ENCODE measurements at regions of chr11 and their contacts with region 1.

Region 1: DNA sequence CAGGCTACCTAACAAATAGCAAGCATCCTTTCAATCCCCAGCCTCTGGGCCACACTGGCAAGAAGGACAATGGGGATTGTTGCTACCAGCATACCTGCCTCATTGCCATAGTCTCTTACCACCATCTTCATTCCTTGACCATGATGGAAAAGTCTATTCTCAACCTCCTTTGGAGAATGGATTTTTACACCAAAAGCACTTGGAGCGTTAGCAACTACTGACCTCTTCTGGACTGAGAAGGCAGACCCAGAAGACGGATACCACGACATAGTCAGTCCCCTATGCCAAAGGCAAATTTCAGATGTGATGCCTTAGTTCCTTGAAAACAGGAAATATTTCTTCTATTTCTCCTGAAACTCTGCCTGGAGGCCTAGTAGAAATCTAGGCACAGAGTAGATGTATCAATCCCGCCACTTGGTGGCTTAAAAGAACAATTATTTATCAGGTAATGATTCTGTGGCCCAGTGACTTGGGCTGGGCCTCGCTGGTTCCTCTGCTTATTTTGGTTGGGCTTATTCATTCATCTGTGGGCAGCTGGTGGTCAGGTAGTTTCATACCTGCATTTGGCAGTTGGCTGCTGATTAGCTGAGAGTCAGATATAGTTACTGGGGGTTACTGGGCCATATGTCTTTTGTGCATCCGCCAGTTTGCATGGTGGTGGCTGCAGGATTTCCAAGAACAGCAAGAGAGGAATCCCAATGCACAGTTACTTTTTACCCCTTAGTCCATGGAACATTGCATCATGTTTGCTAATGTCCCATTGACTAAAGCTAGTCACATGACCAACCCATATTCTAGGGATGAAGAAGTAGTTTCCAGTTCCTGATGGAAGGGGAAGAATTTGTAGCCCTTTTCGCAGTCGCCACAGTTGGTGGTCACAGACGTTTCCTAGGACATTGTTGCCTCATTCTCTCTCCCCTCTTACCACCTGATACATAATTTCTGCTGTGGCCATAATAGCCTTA is 75.2 kb downstream of the DHCR7 start:
- DNase-seq: peak; percentile 17
- H3K4me3 ChIP-seq: no peak overlapping the region
- H3K27ac ChIP-seq: no peak overlapping the region
- H3K4me1 ChIP-seq: no peaks in the 10 kb centered on the region
- H3K27me3 ChIP-seq: peaks cover 2% of the 10 kb centered on the region
- CTCF ChIP-seq: peak; percentile 42 to 59

Region 2: DNA sequence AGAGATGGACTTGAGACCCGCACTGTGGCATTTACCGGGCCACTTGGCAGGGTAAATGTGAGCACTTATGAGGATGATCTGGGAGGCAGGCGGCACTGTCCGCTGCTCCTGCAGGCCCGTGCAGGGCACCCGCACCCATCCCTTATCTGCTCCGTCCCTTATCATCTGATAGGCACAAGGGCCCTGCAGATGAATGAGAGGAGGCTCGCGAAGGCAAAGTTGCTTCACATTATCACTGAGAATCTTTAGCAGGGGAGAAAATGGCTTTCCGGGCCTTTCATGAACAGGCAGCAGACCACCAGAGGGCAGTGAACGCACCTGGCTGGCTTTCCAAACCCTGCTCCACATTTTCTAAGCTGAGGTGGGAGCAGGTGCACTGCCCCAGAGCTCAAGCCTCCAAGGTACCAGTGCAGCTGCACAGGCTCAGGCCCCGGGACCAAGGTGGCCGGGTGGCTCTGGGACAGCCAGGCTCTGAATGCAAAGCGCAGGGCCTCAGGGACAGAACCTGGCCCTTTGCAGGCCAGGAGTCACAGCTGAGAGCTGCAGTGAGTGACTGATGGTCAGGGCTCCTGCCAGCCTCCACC is 286.2 kb before region 1 on chr11:
- CTCF ChIA-PET with region 1: no interaction called
- dilution Hi-C with region 1: no loop called
- in situ Hi-C with region 1: no loop called
- intact Hi-C with region 1: loop called (anchors 1 kb)
- DNase-seq: peak; percentile 14
- H3K4me3 ChIP-seq: no peak overlapping the region
- H3K27ac ChIP-seq: no peak overlapping the region
- H3K4me1 ChIP-seq: no peaks in the 10 kb centered on the region
- H3K27me3 ChIP-seq: no peaks in the 10 kb centered on the region
- CTCF ChIP-seq: peak; percentile 41 to 64